IMR-90 (cell line): ENCODE measurements at regions of chr5 and their contacts with region 1.

Region 1: GRCh38 chr5:17204133-17204489 is 13.3 kb upstream of the BASP1 start:
- DNase-seq: no peak
- ATAC-seq: no peak
- H3K4me3 ChIP-seq: no peak overlapping the region
- H3K27ac ChIP-seq: no peak overlapping the region
- H3K4me1 ChIP-seq: no peaks in the 10 kb centered on the region; the same call in 1 of the 2 replicates
- H3K27me3 ChIP-seq: no peaks in the 10 kb centered on the region
- CTCF ChIP-seq: no peak
- POLR2A ChIP-seq: no peak
- RAD21 ChIP-seq: no peak

Region 2: GRCh38 chr5:16477541-16477940 is 726.6 kb before region 1 on chr5:
- CTCF ChIA-PET with region 1: no interaction called
- POLR2A ChIA-PET with region 1: no interaction called
- dilution Hi-C with region 1: no loop called
- in situ Hi-C with region 1: loop called (anchors 10 kb)
- intact Hi-C with region 1: no loop called
- DNase-seq: no peak
- ATAC-seq: no peak
- H3K4me3 ChIP-seq: no peak overlapping the region
- H3K27ac ChIP-seq: no peak overlapping the region
- H3K4me1 ChIP-seq: no peaks in the 10 kb centered on the region
- H3K27me3 ChIP-seq: no peaks in the 10 kb centered on the region
- CTCF ChIP-seq: no peak
- POLR2A ChIP-seq: no peak
- RAD21 ChIP-seq: no peak

Region 3: DNA sequence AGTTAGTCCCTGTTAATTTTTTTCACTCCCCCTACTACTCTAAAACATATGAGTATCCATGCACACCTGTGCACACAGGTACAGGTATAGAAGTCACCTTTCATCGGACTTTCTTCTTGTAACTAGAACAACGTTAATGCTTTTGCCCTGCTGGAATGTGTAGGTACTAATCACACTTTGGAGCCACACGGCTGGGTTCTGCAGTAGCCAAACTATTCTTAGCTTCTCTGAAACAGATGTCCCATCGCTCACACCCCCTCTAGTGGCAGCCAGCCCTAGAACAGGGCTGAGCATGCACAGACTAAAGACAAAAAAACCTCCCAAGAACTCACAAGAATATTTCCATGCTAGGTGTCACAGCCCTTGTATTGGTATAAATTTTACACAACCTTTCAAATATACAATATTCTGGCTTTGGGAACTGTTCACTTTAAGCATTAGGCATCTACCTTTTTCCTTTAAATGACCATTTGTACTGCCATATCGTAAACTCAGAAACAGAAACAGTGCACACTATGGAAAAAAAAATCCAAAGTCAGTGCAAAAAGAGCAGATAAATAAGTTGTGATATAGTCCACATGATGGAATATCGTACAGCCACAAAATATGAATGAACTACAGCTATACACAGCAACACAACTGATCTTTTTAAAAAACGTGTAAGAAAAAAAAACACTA is 651.3 kb before region 1 on chr5:
- CTCF ChIA-PET with region 1: no interaction called
- POLR2A ChIA-PET with region 1: no interaction called
- dilution Hi-C with region 1: no loop called
- in situ Hi-C with region 1: no loop called
- intact Hi-C with region 1: loop called (anchors 5 kb)
- DNase-seq: peak; percentile 55
- ATAC-seq: peak; percentile 98
- H3K4me3 ChIP-seq: no peak overlapping the region
- H3K27ac ChIP-seq: no peak overlapping the region
- H3K4me1 ChIP-seq: no peaks in the 10 kb centered on the region
- H3K27me3 ChIP-seq: peaks cover 11% of the 10 kb centered on the region
- CTCF ChIP-seq: peak; percentile 73
- POLR2A ChIP-seq: no peak
- RAD21 ChIP-seq: peak; percentile 62